ENCODE measurements at regions of chr1 and their contacts with region 1.

Region 1: DNA sequence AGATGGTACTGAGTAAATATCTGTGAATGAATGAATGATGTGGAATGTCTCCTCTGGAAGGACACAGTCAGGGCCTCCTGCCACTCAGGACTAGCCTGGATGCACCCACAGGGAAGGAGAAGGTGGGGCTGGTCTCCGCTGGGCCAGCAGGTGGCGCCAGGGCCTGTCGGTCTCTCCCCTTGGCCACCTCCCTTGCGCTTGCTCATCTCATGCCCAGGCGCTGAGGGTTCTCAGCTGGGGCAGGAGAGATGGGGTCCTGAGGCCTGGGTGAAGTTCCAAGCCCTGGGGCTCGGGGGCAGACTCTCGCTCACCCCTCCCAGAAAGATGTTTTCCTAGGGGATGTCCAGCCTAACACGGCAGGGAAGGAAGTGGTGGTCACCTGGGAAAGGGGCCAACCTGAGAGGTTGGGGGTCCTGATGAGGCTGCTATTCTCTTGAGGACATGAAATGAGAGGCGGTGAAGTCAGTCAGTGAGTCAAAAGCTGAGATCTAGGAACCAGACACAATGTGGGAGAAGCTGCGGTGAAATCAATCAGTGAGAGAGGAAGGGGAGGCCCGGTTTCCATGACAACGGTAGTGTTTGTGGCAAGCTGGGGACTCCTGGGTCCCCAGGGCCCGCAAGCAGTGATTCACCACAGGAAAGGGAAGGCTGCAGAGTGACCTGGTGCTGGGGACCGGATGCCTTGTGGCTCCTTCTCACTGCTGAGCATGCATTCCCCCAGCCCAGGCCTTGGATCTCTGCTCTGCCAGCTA is 14.6 kb upstream of the MEX3A start:
- DNase-seq: peak; percentile 86 to 93
- ATAC-seq: peak; percentile 96 to 97
- H3K4me3 ChIP-seq: no peak overlapping the region
- H3K27ac ChIP-seq: peak overlapping the region; percentile 91 to 93
- H3K4me1 ChIP-seq: peaks cover 44% of the 10 kb centered on the region
- CTCF ChIP-seq: peak; percentile 95
- EP300 ChIP-seq: no peak
- POLR2A ChIP-seq: no peak
- RAD21 ChIP-seq: peak; percentile 98 to 99

Region 2: GRCh38 chr1:155940531-155940992 is 156.3 kb before region 1 on chr1:
- CTCF ChIA-PET with region 1: interaction called, 6 read pairs
- POLR2A ChIA-PET with region 1: interaction called, 10 read pairs
- DNase-seq: peak in 1 of 2 experiments; percentile 69
- ATAC-seq: peak; percentile 27 to 46; a peak in 5 of 6 replicates
- H3K4me3 ChIP-seq: no peak overlapping the region
- H3K27ac ChIP-seq: peak overlapping the region; percentile 76 to 86
- H3K4me1 ChIP-seq: peaks cover 61% of the 10 kb centered on the region
- CTCF ChIP-seq: no peak
- EP300 ChIP-seq: no peak
- POLR2A ChIP-seq: no peak
- RAD21 ChIP-seq: no peak

Region 3: DNA sequence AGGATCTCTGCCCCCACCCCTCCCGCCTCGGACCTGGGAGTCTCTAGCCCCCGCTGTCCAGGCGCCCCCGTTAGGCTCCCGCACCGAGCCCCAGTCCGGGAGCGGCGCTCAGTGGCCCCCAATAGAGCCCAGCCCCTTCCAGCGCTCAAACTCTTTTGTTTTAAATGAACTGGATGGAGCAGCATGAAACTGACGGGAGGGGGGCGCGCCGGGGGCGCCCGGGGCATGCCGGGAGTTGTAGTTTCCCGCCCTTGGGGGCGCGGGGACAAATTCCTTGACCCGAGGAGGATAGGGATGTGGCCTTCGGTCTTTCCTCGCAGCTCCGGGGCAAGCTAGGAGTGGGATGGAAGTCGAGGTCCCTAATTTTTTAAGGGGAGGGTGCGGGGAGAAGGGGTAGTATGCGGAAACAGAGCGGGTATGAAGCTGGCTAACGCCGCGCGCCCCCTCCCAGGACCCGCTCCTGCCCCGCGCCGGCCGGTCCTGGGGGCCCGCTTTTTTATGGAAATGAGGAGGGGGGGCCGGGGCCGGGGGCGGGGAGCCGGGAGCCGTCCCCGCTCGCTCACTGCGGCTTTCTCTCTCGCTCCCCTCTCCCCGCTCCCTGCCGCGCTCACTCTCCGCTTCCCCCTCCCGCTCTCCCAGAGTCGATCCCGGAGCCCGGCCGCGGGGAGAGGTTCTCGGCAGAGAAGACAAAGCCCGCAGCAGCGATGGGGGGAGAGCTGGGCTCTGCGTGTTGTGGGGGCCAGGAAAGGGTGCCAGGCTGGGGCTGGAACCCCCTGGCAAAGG is 14.3 kb before region 1 on chr1 and contains the start of gene MEX3A:
- CTCF ChIA-PET with region 1: interaction called, 43 read pairs
- POLR2A ChIA-PET with region 1: no interaction called
- DNase-seq: peak; percentile 59 to 86
- ATAC-seq: peak; percentile 78 to 88
- H3K4me3 ChIP-seq: peak within 1 kb of the TSS; percentile 83
- H3K27ac ChIP-seq: peak within 1 kb of the TSS; percentile 88 to 93
- H3K4me1 ChIP-seq: peaks cover 29% of the 10 kb centered on the region
- CTCF ChIP-seq: no peak
- EP300 ChIP-seq: no peak
- POLR2A ChIP-seq: 0 out of 2 replicates have a peak, but pooled peaks have one; percentile 9
- RAD21 ChIP-seq: no peak
- polyA plus RNA-seq, gene MEX3A: 1.8 and 2.4 TPM in 2 replicates

Region 4: GRCh38 chr1:156114101-156114916 is 17.5 kb after region 1 on chr1 and contains the start of gene LMNA:
- CTCF ChIA-PET with region 1: interaction called, 2,239 read pairs
- POLR2A ChIA-PET with region 1: interaction called, 15 read pairs
- DNase-seq: peak; percentile 96 to 98
- ATAC-seq: peak; percentile 83 to 84
- H3K4me3 ChIP-seq: peak within 1 kb of the TSS; percentile 99
- H3K27ac ChIP-seq: peak within 1 kb of the TSS; percentile 95 to 98
- H3K4me1 ChIP-seq: peaks cover 51% of the 10 kb centered on the region
- CTCF ChIP-seq: no peak
- EP300 ChIP-seq: peak; percentile 7 to 43; a peak in 1 of 5 replicates
- POLR2A ChIP-seq: peak; percentile 97
- RAD21 ChIP-seq: 0 out of 5 replicates have a peak, but pooled peaks of 1 of the 2 experiments have one; percentile 6
- polyA plus RNA-seq, gene LMNA: 155 and 214 TPM in 2 replicates

Region 5: GRCh38 chr1:156212833-156213643 is 116.2 kb after region 1 on chr1 and contains the start of gene PMF1:
- CTCF ChIA-PET with region 1: interaction called, 291 read pairs
- POLR2A ChIA-PET with region 1: interaction called, 5 read pairs
- DNase-seq: peak; percentile 96 to 100
- ATAC-seq: peak; percentile 98
- H3K4me3 ChIP-seq: peak within 1 kb of the TSS; percentile 65
- H3K27ac ChIP-seq: peak within 1 kb of the TSS; percentile 93 to 96
- H3K4me1 ChIP-seq: peaks cover 13% of the 10 kb centered on the region; the same call in 2 of the 3 replicates
- CTCF ChIP-seq: no peak
- EP300 ChIP-seq: no peak
- POLR2A ChIP-seq: peak; percentile 67
- RAD21 ChIP-seq: no peak
- polyA plus RNA-seq, gene PMF1: 61.4 and 63.9 TPM in 2 replicates